Gastrocnemius medialis (tissue), 4 donors: ENCODE measurements at regions of chr12 and their contacts with region 1.

Region 1: GRCh38 chr12:108234158-108234557 is 105.0 kb downstream of the CMKLR1 start:
- DNase-seq: peak in 1 of 2 donors; percentile 21
- ATAC-seq: no peak
- H3K4me3 ChIP-seq: no peak overlapping the region
- H3K27ac ChIP-seq: no peak overlapping the region
- H3K4me1 ChIP-seq: no peaks in the 10 kb centered on the region
- H3K27me3 ChIP-seq: peaks cover 0 to under 1% (median 0%) of the 10 kb centered on the region in 3 donors
- CTCF ChIP-seq: peak in 2 of 5 experiments; percentile 14 to 15
- POLR2A ChIP-seq: no peak

Region 2: DNA sequence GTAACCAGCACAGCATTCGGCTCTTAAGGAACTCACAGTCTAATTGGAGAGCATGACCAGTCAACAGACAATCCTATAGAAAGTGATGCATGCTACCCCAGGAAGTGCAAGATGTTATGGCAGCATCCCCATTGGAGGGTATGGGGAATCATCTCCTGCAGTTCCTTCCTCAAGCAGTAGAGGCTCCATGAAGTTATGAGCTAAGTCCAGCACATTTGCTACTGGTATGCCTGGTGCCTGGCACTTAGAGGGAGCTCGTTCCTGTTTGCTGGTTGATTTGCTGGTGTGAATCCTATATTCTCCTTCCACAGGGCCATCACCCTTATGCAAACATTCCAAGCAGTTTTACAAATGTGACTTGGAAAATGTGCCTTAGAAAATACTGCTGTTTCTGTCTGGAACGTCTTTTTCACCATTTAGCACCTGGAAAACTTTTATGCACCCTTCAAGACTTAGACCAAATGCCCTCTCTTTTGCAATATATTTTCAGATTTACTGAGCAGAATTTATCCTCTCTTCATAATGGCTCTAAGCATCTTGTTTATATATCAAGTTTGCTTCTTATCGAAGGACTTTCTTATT is 241.2 kb before region 1 on chr12:
- in situ Hi-C with region 1: no loop called
- intact Hi-C with region 1: no loop called
- DNase-seq: no peak
- ATAC-seq: no peak
- H3K4me3 ChIP-seq: no peak overlapping the region
- H3K27ac ChIP-seq: no peak overlapping the region
- H3K4me1 ChIP-seq: no peaks in the 10 kb centered on the region
- H3K27me3 ChIP-seq: no peaks in the 10 kb centered on the region
- CTCF ChIP-seq: no peak
- POLR2A ChIP-seq: no peak

Region 3: DNA sequence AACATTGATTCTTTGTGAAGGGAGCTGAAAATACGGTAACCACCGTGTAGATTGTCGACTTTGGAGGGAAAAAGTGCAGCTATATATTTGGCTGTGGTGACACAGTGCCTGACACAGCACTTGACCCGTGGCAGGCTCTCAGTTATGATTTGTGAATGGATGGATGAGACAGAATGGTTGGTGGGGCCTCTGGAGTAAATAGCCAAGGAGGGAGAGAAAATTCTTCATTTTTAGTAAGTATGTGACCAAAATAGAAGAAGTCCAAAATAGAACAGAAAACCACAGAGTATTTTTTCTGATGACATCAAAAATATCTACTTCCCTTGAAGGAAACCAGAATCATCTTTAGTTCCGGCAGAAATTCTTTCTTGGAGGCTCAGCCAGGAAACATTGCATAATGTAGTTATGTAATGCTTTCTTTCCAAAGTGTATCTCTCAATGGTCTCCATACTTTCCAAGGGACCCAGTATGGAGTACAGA is 187.0 kb before region 1 on chr12:
- in situ Hi-C with region 1: no loop called
- intact Hi-C with region 1: no loop called
- DNase-seq: no peak
- ATAC-seq: peak in 1 of 2 donors; percentile 68
- H3K4me3 ChIP-seq: peak overlapping the region in 1 of 4 donors; percentile 20
- H3K27ac ChIP-seq: peak overlapping the region in 2 of 4 donors; percentile 5 to 41
- H3K4me1 ChIP-seq: no peaks in the 10 kb centered on the region
- H3K27me3 ChIP-seq: no peaks in the 10 kb centered on the region
- CTCF ChIP-seq: no peak
- POLR2A ChIP-seq: no peak

Region 4: GRCh38 chr12:108457006-108457733 is 223.0 kb after region 1 on chr12:
- in situ Hi-C with region 1: loop called in 2 of 4 experiments (anchors 25 kb)
- intact Hi-C with region 1: no loop called
- DNase-seq: no peak
- ATAC-seq: no peak
- H3K4me3 ChIP-seq: no peak overlapping the region
- H3K27ac ChIP-seq: no peak overlapping the region
- H3K4me1 ChIP-seq: no peaks in the 10 kb centered on the region
- H3K27me3 ChIP-seq: peaks cover 0 to 8% (median 0%) of the 10 kb centered on the region in 3 donors
- CTCF ChIP-seq: peak in 4 of 5 experiments; percentile 8 to 43 (median 30)
- POLR2A ChIP-seq: no peak